Mammary epithelial cell (primary cell): ENCODE measurements at regions of chr11 and their contacts with region 1.

Region 1: GRCh38 chr11:63212742-63213141 is 30.7 kb downstream of the SLC22A25 start:
- DNase-seq: peak; percentile 9
- H3K4me3 ChIP-seq: no peak overlapping the region
- H3K27ac ChIP-seq: no peak overlapping the region
- H3K4me1 ChIP-seq: no peaks in the 10 kb centered on the region
- H3K27me3 ChIP-seq: no peaks in the 10 kb centered on the region
- CTCF ChIP-seq: peak; percentile 49 to 50

Region 2: GRCh38 chr11:62911137-62912130 is 301.3 kb before region 1 on chr11:
- CTCF ChIA-PET with region 1: no interaction called
- dilution Hi-C with region 1: loop called (anchors 25 kb)
- in situ Hi-C with region 1: loop called (anchors 10 to 25 kb)
- intact Hi-C with region 1: loop called (anchors 1 kb)
- DNase-seq: no peak
- H3K4me3 ChIP-seq: no peak overlapping the region
- H3K27ac ChIP-seq: no peak overlapping the region
- H3K4me1 ChIP-seq: no peaks in the 10 kb centered on the region
- H3K27me3 ChIP-seq: no peaks in the 10 kb centered on the region
- CTCF ChIP-seq: no peak

Region 3: DNA sequence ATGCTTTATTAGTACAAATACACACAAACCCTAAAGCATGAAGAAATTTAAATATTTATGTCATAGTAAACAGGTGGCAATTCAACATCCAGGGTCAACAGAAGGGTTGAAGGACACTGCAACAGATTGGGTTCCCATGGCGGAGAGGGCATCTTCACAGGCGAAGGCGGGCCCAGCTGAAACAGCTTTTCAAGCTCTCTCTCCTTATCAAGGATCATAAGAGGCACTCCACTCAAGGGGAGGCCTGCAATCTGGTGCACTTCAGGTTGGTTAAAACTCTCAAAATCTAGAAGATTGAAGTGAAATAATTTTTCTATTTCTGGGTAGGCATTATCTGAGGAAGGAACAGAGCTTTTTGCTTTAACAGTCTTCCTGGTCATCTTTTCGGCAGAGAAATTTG is 180.3 kb before region 1 on chr11:
- CTCF ChIA-PET with region 1: no interaction called
- dilution Hi-C with region 1: no loop called
- in situ Hi-C with region 1: loop called (anchors 10 kb)
- intact Hi-C with region 1: loop called (anchors 1 kb)
- DNase-seq: no peak
- H3K4me3 ChIP-seq: no peak overlapping the region
- H3K27ac ChIP-seq: no peak overlapping the region
- H3K4me1 ChIP-seq: no peaks in the 10 kb centered on the region
- H3K27me3 ChIP-seq: no peaks in the 10 kb centered on the region
- CTCF ChIP-seq: no peak

Region 4: GRCh38 chr11:63132985-63133775 is 79.6 kb before region 1 on chr11:
- CTCF ChIA-PET with region 1: no interaction called
- dilution Hi-C with region 1: no loop called
- in situ Hi-C with region 1: no loop called
- intact Hi-C with region 1: loop called (anchors 5 kb)
- DNase-seq: no peak
- H3K4me3 ChIP-seq: no peak overlapping the region
- H3K27ac ChIP-seq: no peak overlapping the region
- H3K4me1 ChIP-seq: no peaks in the 10 kb centered on the region
- H3K27me3 ChIP-seq: no peaks in the 10 kb centered on the region
- CTCF ChIP-seq: no peak